MCF 10A (cell line): ENCODE measurements at regions of chr10 and their contacts with region 1.

Region 1: DNA sequence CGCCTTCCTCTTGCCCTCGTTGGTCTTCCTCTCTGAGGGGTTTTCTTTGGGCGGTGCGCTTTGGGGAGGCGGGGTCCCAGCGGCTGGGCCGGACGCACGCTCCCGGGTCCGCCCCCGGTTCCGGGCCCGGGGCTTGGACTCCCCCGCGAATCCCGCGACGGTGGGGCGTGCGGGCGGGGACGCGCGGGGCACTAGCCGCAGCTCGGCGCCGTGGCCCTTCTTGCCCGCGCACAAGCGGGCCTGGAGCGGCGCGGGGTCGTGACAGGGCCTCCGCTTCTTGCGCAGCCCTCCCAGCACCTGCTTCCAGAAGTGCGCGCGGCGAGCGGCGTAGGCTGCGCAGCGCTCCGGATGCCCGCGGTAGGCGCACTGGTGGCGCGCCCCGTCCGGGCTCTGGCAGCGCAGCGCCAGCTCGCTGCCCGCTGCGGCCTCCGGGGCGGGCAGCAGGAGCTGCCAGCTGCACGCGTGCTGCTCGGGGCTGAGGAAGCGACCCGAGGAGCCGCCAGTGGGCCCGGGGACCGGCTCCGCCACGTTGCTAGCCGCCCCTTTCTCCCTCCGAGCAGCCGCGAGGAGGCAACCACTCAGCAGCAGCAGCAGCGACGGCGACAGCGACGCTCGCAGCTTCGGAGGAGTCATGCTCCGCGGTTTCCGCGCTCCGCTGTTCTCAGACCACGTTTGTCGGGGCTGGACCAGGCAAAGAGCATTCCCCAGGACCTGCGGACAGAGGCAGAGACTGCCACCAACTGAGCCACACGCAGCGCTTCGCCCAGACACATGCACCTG is 759 bp downstream of the FGFBP3 start:
- DNase-seq: peak; percentile 70
- H3K4me3 Mint-ChIP-seq: peak overlapping the region; percentile 76
- H3K27ac Mint-ChIP-seq: peak overlapping the region; percentile 3
- H3K4me1 Mint-ChIP-seq: peaks cover 6% of the 10 kb centered on the region
- H3K27me3 Mint-ChIP-seq: peaks cover 4% of the 10 kb centered on the region
- CTCF ChIP-seq: peak; percentile 2

Region 2: GRCh38 chr10:91409869-91410637 is 498.5 kb before region 1 on chr10 and contains the start of gene HECTD2:
- CTCF ChIA-PET with region 1: no interaction called
- POLR2A ChIA-PET with region 1: interaction called, 4 read pairs
- intact Hi-C with region 1: loop called (anchors 10 kb)
- DNase-seq: peak; percentile 72
- H3K4me3 Mint-ChIP-seq: peak within 1 kb of the TSS; percentile 95
- H3K27ac Mint-ChIP-seq: peak within 1 kb of the TSS; percentile 99
- H3K4me1 Mint-ChIP-seq: peaks cover 7% of the 10 kb centered on the region
- H3K27me3 Mint-ChIP-seq: no peaks in the 10 kb centered on the region
- CTCF ChIP-seq: peak; percentile 37
- total RNA-seq, gene HECTD2: 5.9 and 8.2 TPM in 2 replicates

Region 3: DNA sequence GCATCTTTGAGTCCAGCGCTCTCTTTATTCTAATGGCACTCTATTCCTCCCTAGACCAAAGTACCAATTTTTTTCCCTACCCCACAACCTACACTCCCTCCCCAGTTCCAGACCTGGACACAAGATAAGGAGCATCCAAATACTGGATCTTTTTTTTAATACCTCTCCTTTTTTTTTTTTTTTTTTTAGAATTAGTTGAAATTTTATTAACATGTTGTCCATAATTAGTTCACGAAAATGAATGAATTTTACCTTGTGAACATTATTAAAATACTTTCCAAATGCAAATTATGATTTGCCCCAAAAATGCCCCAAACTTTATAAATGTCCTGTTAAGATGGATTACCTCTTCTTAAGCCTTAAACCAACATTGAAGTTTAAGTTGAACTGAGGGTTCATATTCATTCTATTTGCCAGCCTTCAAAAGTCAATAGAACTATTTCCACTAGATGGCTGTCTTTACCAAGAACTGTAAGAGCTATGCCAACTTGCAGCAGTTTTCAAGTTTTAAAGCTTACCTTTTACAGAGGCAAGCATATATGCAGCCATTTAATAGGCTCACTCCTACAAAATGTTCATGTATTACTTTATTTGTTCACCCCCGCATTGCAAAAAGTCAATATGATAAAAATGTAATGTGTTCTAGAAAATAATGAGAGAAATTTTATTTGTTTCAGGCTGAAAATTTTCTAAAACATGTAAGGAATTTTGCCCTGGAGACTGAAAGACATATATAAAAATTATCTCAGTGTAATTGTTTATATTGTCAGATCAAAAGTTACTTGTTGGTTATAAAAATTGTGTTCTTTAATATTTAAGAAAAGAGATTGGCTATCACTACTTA is 150.0 kb before region 1 on chr10:
- CTCF ChIA-PET with region 1: interaction called, 17 read pairs
- POLR2A ChIA-PET with region 1: interaction called, 8 read pairs
- intact Hi-C with region 1: loop called (anchors 1 kb)
- DNase-seq: peak; percentile 52
- H3K4me3 Mint-ChIP-seq: no peak overlapping the region
- H3K27ac Mint-ChIP-seq: no peak overlapping the region
- H3K4me1 Mint-ChIP-seq: no peaks in the 10 kb centered on the region
- H3K27me3 Mint-ChIP-seq: peaks cover 54% of the 10 kb centered on the region
- CTCF ChIP-seq: peak; percentile 57

Region 4: GRCh38 chr10:91820144-91820543 is 88.4 kb before region 1 on chr10:
- CTCF ChIA-PET with region 1: no interaction called
- POLR2A ChIA-PET with region 1: no interaction called
- intact Hi-C with region 1: loop called (anchors 1 kb)
- DNase-seq: peak; percentile 44
- H3K4me3 Mint-ChIP-seq: no peak overlapping the region
- H3K27ac Mint-ChIP-seq: no peak overlapping the region
- H3K4me1 Mint-ChIP-seq: no peaks in the 10 kb centered on the region
- H3K27me3 Mint-ChIP-seq: no peaks in the 10 kb centered on the region
- CTCF ChIP-seq: no peak

Region 5: DNA sequence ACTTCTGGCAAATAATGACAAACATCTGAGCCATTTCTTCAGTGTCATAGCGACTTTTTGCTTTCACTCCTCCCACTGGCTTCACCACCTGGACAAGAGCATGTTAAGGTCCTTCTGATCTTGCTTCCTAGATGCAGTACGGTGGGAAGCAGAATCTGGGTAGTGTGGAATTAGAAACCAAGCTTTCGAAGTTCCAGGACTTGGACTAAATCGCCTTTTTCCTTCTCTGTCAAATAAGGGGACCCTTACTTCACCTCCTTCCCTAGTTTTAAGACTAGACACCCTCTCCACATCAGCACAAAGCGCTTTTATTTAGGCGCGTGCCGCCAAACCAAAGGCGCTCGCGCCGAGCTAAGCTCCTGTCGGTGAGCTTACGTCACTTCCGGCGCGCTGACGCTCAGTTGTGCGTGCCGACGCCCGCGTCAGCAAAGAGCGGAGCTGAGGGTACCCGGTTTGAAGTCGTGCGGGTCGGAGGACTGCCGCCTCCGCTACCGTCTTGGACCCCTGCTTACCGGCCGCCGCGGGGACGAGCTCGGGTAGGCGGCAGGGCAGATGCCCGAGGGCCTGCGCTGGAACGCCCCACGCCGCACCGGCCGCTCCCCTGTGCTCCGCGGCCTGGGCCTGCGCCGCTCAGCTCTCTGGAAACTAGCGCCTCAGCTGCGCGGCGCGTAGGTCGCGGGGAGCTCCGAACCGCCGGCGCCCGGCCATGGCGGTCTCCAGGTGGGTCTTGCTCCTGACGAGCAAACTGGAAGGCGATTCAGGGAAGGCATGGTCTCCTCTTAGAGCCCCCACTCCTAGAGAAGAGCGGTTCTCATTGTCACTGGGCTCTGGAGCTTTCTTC is 15.1 kb after region 1 on chr10 and contains the start of gene BTAF1:
- CTCF ChIA-PET with region 1: interaction called, 5 read pairs
- POLR2A ChIA-PET with region 1: interaction called, 41 read pairs
- intact Hi-C with region 1: no loop called
- DNase-seq: peak; percentile 90
- H3K4me3 Mint-ChIP-seq: peak within 1 kb of the TSS; percentile 84
- H3K27ac Mint-ChIP-seq: peak within 1 kb of the TSS; percentile 98
- H3K4me1 Mint-ChIP-seq: peaks cover 17% of the 10 kb centered on the region
- H3K27me3 Mint-ChIP-seq: no peaks in the 10 kb centered on the region
- CTCF ChIP-seq: no peak
- total RNA-seq, gene BTAF1: 35.5 and 37.0 TPM in 2 replicates